ENCODE measurements at regions of chr13 and their contacts with region 1.

Region 1: GRCh38 chr13:26929971-26930730 is 169.6 kb upstream of the GPR12 start:
- DNase-seq: peak in 1 of 2 donors; percentile 15
- ATAC-seq: no peak
- H3K4me3 ChIP-seq: no peak overlapping the region
- H3K27ac ChIP-seq: no peak overlapping the region
- H3K4me1 ChIP-seq: no peaks in the 10 kb centered on the region
- H3K27me3 ChIP-seq: no peaks in the 10 kb centered on the region
- CTCF ChIP-seq: peak; percentile 60 to 91 (median 73)
- POLR2A ChIP-seq: no peak

Region 2: DNA sequence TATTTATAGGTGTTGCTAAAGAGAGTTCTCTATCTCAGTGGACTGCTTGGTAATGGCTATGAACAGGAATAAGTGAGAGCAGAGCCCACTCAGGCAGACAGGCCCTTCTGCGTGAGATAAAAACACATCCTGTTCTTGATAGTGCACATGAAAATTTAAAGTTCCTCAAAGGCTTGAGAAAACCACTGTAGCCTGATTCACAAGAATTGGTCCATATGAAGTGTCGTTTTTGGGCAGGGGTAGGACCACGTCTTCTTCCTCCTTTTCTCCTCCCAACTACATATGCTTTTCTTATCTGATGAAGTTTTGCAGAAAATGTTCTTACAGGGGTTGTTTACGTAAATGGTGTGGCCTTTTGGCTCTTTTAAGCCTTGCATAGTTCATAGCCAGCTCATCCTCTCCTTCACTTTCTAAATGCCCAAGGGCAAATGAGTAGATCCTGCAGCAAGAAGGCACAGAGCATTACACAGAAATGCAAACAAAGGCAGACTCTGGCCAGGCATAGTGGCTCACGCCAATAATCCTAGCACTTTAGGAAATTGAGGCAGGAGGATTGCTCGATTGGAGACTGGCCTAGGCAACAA is 761.8 kb before region 1 on chr13:
- in situ Hi-C with region 1: loop called in 1 of 4 experiments (anchors 25 kb)
- intact Hi-C with region 1: no loop called
- DNase-seq: no peak
- ATAC-seq: no peak
- H3K4me3 ChIP-seq: no peak overlapping the region
- H3K27ac ChIP-seq: no peak overlapping the region
- H3K4me1 ChIP-seq: no peaks in the 10 kb centered on the region
- H3K27me3 ChIP-seq: no peaks in the 10 kb centered on the region
- CTCF ChIP-seq: no peak
- POLR2A ChIP-seq: no peak

Region 3: GRCh38 chr13:26707122-26708006 is 222.8 kb before region 1 on chr13:
- in situ Hi-C with region 1: loop called in 1 of 4 experiments (anchors 25 kb)
- intact Hi-C with region 1: no loop called
- DNase-seq: no peak
- ATAC-seq: no peak
- H3K4me3 ChIP-seq: no peak overlapping the region
- H3K27ac ChIP-seq: no peak overlapping the region
- H3K4me1 ChIP-seq: no peaks in the 10 kb centered on the region
- H3K27me3 ChIP-seq: no peaks in the 10 kb centered on the region
- CTCF ChIP-seq: peak in 2 of 5 experiments; percentile 25 to 38
- POLR2A ChIP-seq: no peak